Activated B cell treated with CpG ODN at 0.5 μM for 24 hours (primary cell): ENCODE measurements at regions of chr10 and their contacts with region 1.

Region 1: DNA sequence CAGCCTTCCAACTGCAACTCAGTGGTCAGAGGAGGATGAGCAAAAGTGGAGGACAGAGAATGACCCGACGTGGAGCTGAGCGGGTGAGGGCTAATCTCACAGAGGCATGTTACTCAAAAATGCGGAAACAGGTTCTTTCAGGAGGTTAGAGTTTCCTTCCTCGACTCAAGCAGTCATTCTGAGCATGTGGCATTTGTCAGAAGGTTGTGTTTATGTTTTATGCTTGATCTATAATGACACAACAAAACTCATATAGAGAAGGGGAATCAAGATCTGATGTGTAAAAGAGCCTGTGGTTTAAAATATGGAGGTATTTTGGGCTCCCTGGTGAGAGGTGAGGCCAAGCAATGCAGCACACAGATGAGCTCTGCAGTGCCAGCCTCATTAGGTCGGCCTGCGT is 311.4 kb downstream of the ADARB2 start:
- DNase-seq: no peak
- ATAC-seq: peak; percentile 71
- H3K4me3 Mint-ChIP-seq: peak overlapping the region; percentile 42
- H3K27ac Mint-ChIP-seq: peak overlapping the region; percentile 77
- H3K4me1 Mint-ChIP-seq: peaks cover 65% of the 10 kb centered on the region
- H3K27me3 Mint-ChIP-seq: peaks cover 2% of the 10 kb centered on the region
- CTCF ChIP-seq: no peak

Region 2: DNA sequence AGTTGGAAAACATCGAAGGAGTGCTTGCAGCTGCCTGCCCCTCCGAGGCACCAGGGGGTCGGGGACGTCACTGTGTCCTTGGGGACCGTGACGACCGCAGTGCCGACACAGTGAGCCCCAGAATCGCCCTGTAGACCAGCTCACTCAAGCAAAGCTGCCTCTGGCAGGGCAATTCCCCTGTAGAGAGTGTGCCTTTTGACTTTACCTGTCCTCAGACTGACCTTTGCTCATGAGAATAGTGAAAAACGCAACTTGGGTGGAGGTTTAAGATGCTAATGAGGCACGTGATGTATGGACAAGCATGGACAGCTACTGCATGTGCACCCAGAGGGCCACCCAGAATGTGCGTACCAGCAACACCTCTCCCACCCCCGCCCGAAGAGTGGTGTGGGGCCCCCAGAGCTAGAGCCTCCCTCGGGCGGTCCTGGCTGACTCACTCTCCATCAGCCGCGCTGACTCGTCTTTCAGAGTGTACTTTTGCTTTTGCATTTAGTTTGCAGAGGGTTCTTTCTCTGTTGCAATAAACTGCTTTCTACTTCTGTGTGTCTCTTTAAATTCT is 39.6 kb after region 1 on chr10:
- CTCF ChIA-PET with region 1: no interaction called
- POLR2A ChIA-PET with region 1: no interaction called
- intact Hi-C with region 1: loop called (anchors 5 kb)
- DNase-seq: no peak
- ATAC-seq: peak; percentile 83
- H3K4me3 Mint-ChIP-seq: peak overlapping the region; percentile 62
- H3K27ac Mint-ChIP-seq: no peak overlapping the region
- H3K4me1 Mint-ChIP-seq: peaks cover 44% of the 10 kb centered on the region
- H3K27me3 Mint-ChIP-seq: peaks cover 2% of the 10 kb centered on the region
- CTCF ChIP-seq: no peak

Region 3: DNA sequence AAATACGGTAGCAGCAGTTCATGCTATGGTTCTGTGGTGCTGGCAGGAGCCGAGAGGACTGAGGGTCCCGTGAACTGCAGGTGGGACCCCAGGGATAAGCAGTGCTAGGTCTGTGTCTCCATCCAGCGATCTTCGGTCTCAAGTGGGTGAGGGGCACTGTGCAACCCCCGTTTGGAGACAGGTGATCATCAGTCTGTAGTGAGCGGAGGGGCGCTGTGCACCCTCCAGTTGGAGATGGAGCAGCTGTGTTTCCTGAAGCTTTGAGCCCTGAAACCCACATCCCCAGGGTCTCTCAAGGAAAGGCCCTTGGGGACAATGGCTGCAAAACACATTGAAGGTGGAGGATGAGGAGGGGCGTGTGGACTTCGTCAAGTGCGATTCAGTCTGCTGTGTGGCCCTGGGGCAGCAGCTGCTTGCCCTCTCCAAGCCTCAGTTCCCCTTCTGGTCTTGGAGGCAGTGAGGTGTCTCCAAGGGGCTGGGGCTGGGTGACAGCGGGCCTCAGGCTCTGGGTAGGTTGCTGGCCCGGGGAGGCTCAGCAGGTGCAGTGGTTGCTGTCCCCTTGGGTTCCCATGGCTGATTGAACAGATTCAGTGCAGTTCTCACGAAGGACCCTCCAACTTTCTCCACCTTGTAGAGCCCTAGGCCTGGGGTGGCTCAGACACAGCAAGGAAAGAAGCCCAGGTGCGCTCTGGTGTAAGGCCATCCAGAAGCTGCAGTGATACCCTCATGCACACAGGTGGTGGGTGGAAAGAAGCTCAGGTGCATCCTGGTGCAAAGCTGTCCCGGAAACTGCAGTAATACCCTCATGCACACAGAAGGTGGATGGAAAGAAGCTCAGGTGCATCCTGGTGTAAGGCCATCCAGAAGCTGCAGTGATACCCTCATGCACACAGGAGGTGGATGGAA is 150.8 kb after region 1 on chr10:
- CTCF ChIA-PET with region 1: no interaction called
- POLR2A ChIA-PET with region 1: interaction called, 3 read pairs
- intact Hi-C with region 1: loop called (anchors 1 kb)
- DNase-seq: no peak
- ATAC-seq: peak; percentile 70
- H3K4me3 Mint-ChIP-seq: no peak overlapping the region
- H3K27ac Mint-ChIP-seq: no peak overlapping the region
- H3K4me1 Mint-ChIP-seq: peaks cover 71% of the 10 kb centered on the region
- H3K27me3 Mint-ChIP-seq: peaks cover 12% of the 10 kb centered on the region
- CTCF ChIP-seq: no peak